Breast epithelium (tissue), 4 donors: ENCODE measurements at regions of chr3 and their contacts with region 1.

Region 1: GRCh38 chr3:51974963-51975851 is at the start of gene ABHD14A:
- DNase-seq: peak; percentile 53 to 70
- H3K4me3 ChIP-seq: peak within 1 kb of the TSS; percentile 69 to 77 (median 72)
- H3K27ac ChIP-seq: peak within 1 kb of the TSS; percentile 96 to 98
- H3K4me1 ChIP-seq: peaks cover 7 to 12% of the 10 kb centered on the region in 2 donors
- H3K27me3 ChIP-seq: no peaks in the 10 kb centered on the region
- CTCF ChIP-seq: no peak
- POLR2A ChIP-seq: no peak
- total RNA-seq, gene ABHD14A: 16.1 to 32.6 (median 17.1) TPM

Region 2: DNA sequence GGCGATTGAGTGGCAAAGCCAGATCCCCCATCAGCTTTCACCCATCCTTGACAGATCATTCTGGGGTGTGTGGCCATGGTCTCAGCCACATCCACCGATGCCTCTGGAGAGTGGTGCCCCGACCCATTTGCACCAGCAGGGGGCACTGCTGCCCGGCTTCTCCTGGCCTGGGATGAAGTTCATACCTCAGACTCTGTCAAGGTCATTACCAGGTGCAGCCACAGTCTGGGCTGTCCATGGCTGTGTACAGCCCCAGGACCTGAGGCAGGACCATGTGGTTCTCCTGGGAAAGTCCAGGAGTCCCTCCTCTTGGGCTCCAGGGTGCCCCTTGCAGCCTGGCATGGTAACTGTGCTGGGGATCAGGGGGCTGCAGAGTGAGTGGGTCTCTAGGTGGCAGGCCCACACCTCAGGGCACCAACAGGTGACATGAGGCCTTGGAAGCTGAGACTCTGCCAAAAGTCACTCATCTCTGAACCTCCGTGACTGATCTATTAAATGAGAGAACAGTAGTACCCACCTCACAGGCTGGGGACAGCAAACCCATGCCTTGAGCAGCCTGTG is 1539.0 kb before region 1 on chr3:
- intact Hi-C with region 1: no loop called
- DNase-seq: peak; percentile 43 to 78
- H3K4me3 ChIP-seq: no peak overlapping the region
- H3K27ac ChIP-seq: no peak overlapping the region
- H3K4me1 ChIP-seq: no peaks in the 10 kb centered on the region
- H3K27me3 ChIP-seq: no peaks in the 10 kb centered on the region
- CTCF ChIP-seq: peak; percentile 50 to 80 (median 70)
- POLR2A ChIP-seq: no peak

Region 3: GRCh38 chr3:51941798-51942602 is 33.2 kb before region 1 on chr3 and contains the starts of genes PARP3 and RRP9:
- intact Hi-C with region 1: loop called (anchors 2 kb)
- DNase-seq: peak; percentile 100
- H3K4me3 ChIP-seq: peak within 1 kb of the TSS; percentile 77 to 94 (median 77)
- H3K27ac ChIP-seq: peak within 1 kb of the TSS; percentile 96 to 98
- H3K4me1 ChIP-seq: peaks cover 7 to 18% of the 10 kb centered on the region in 2 donors
- H3K27me3 ChIP-seq: no peaks in the 10 kb centered on the region
- CTCF ChIP-seq: peak; percentile 99 to 100 (median 99)
- POLR2A ChIP-seq: peak; percentile 42
- total RNA-seq, gene PARP3: 21.4 to 33.6 (median 31.8) TPM
- total RNA-seq, gene RRP9: 23.1 to 24.6 (median 23.8) TPM

Region 4: DNA sequence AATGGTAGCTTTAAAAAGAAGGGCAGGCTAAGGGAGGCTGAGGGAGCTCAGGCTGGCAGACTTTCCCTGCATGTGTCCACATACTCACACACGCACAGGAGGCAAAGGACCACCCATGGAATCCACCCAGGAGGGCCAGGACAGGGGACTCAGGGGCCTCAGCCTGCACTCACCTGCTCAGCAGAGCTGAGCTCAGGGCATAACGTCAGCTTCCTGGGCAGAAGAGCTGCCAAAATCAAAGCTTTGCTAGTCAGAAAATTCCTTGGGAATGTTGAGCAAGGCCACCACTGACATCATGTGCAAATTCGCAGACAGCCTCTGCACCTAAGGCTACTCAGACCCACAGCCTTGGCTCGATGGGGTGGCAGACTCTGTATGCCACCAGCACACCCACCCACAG is 206.3 kb after region 1 on chr3:
- intact Hi-C with region 1: no loop called
- DNase-seq: no peak
- H3K4me3 ChIP-seq: no peak overlapping the region
- H3K27ac ChIP-seq: peak overlapping the region; percentile 55 to 63
- H3K4me1 ChIP-seq: peaks cover 6 to 11% of the 10 kb centered on the region in 2 donors
- H3K27me3 ChIP-seq: no peaks in the 10 kb centered on the region
- CTCF ChIP-seq: no peak
- POLR2A ChIP-seq: no peak

Region 5: DNA sequence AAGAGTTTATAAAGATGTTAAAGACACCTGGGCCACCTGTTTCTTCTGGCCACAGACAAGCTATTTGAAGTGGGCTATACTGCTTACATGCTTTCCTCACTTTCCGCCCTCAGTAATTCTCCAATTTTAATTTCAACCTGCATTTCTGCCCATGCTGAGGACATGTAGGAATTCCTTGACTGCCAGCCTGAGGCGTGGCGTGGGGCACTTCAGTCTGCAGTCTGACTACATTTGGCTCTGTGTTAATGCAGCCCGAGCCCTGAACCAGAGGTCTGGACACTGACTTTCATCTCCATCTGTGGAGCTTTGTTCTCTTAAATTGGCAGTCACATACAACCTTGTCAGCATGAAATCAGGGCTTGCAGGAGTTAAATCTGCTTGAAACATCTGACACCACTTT is 569.7 kb after region 1 on chr3:
- intact Hi-C with region 1: no loop called
- DNase-seq: no peak
- H3K4me3 ChIP-seq: no peak overlapping the region
- H3K27ac ChIP-seq: no peak overlapping the region
- H3K4me1 ChIP-seq: no peaks in the 10 kb centered on the region
- H3K27me3 ChIP-seq: no peaks in the 10 kb centered on the region
- CTCF ChIP-seq: no peak
- POLR2A ChIP-seq: no peak